ENCODE measurements at regions of chr20 and their contacts with region 1.

Region 1: DNA sequence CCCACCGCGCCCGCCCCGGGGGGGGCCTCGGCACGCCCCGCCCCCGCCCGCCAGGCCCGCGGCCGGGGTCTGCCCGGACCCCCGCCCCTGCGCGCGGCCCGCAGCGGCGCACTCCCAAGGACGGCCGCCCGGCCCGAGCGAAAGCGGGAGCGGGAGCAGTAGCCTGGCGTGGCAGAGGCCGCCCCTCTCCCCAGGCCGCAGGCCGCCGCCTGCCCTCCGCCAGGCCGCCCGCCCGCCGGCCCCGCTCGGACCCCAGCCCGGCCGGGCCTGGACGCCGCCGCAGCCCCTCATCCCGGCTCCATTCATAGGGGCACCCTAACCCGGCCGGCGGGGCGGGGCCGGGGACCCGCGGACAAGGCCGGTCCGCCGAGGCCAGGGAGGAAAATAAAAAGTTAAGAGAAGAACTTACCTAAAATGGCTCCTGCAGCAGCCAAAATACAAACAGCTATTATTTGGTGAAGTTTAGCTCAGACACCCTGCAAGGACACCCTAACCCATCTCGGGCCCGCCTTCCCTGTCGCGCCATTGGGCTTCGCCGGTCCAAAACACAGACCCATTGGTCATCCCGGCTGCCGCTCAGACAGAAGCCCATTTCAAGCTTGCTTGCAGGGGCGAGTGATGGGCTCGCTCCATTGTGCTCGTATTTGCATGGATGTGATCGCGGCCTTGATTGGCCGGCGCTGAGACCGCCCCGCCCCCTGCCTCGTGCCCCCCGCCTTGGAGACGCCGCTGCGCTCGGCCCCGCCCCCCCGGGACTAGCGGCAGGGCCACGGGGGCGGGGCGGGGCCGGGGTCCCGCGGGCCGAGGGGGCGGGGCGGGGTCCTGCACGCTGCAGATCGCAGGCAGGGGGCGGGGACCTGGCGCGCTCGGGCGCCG is at the start of gene CHD6:
- DNase-seq: peak; percentile 99 to 100
- ATAC-seq: peak; percentile 93 to 99 (median 95)
- H3K4me3 ChIP-seq: peak within 1 kb of the TSS; percentile 66
- H3K4me3 Mint-ChIP-seq: peak within 1 kb of the TSS; percentile 96
- H3K27ac ChIP-seq: peak within 1 kb of the TSS; percentile 69
- H3K27ac Mint-ChIP-seq: peak within 1 kb of the TSS; percentile 79 to 91
- H3K4me1 ChIP-seq: peaks cover 14% of the 10 kb centered on the region
- H3K4me1 Mint-ChIP-seq: peaks cover 33 to 42% of the 10 kb centered on the region in 2 donors
- H3K27me3 ChIP-seq: no peaks in the 10 kb centered on the region
- H3K27me3 Mint-ChIP-seq: peaks cover 0 to 5% of the 10 kb centered on the region in 2 donors
- CTCF ChIP-seq: no peak
- total RNA-seq, gene CHD6: 82.8 to 96.6 (median 90.4) TPM

Region 2: GRCh38 chr20:41572010-41572560 is 46.1 kb before region 1 on chr20:
- intact Hi-C with region 1: loop called (anchors 5 kb)
- DNase-seq: peak in 1 of 2 donors; percentile 9
- ATAC-seq: no peak
- H3K4me3 ChIP-seq: no peak overlapping the region
- H3K4me3 Mint-ChIP-seq: no peak overlapping the region
- H3K27ac ChIP-seq: no peak overlapping the region
- H3K27ac Mint-ChIP-seq: no peak overlapping the region
- H3K4me1 ChIP-seq: peaks cover 17% of the 10 kb centered on the region
- H3K4me1 Mint-ChIP-seq: peaks cover 78 to 86% of the 10 kb centered on the region in 2 donors
- H3K27me3 ChIP-seq: no peaks in the 10 kb centered on the region
- H3K27me3 Mint-ChIP-seq: no peaks in the 10 kb centered on the region
- CTCF ChIP-seq: no peak

Region 3: DNA sequence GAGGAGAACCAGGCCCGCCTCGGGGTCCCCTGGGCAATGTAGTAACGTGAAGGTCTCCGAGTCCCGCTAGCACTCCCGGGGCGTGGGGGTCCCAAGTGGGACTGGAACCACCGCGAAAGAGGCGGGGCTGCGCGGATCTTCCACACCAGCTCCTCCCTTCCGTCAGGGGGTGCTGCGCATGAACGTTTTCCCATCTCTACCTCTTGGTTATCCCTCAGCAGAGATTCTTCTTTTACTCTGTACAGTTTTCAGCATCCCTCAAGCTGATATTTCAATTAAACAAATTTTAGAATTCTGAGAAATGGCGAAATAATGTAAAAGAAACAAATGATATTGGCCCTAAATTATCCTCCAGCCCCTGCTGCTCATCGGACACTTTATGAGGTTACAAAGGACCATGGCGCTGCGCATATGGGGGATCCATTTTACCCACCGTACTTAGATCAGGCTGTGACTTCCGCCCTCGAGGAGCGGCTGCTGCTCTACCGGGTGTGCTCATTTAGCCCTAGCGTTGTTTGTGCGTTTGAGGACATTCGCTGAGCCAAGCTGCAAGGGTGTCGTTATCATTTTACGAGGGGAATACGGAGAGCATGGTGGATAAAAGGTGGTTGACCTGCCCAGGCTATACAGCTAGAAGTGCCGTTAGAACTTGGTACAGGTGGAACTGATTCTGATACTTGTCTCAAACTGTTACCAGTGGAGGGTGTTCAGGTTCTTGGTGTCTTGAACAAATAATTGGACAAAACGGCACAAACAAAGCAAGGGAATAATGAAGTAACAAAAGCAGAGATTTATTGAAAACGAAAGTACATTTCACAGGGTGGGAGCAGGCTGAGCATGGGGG is 75.2 kb after region 1 on chr20:
- intact Hi-C with region 1: loop called (anchors 2 kb)
- DNase-seq: peak; percentile 70 to 93
- ATAC-seq: peak; percentile 91 to 94 (median 91)
- H3K4me3 ChIP-seq: peak overlapping the region; percentile 97
- H3K4me3 Mint-ChIP-seq: peak overlapping the region; percentile 97
- H3K27ac ChIP-seq: peak overlapping the region; percentile 93
- H3K27ac Mint-ChIP-seq: peak overlapping the region; percentile 87 to 92
- H3K4me1 ChIP-seq: peaks cover 15% of the 10 kb centered on the region
- H3K4me1 Mint-ChIP-seq: peaks cover 23 to 28% of the 10 kb centered on the region in 2 donors
- H3K27me3 ChIP-seq: no peaks in the 10 kb centered on the region
- H3K27me3 Mint-ChIP-seq: peaks cover 3 to 8% of the 10 kb centered on the region in 2 donors
- CTCF ChIP-seq: peak; percentile 61

Measured in natural killer cell (primary cell).